CD4-positive, alpha-beta T cell (primary cell): ENCODE measurements at regions of chr19 and their contacts with region 1.

Region 1: GRCh38 chr19:45817010-45817724 is 2.1 kb upstream of the RSPH6A start:
- DNase-seq: peak; percentile 92 to 98 (median 96)
- ATAC-seq: peak; percentile 100
- H3K4me3 ChIP-seq: no peak overlapping the region
- H3K4me3 Mint-ChIP-seq: no peak overlapping the region
- H3K27ac ChIP-seq: no peak overlapping the region
- H3K27ac Mint-ChIP-seq: no peak overlapping the region
- H3K4me1 ChIP-seq: peaks cover 25% of the 10 kb centered on the region
- H3K4me1 Mint-ChIP-seq: peaks cover 6% of the 10 kb centered on the region
- H3K27me3 ChIP-seq: peaks cover 7 to 13% of the 10 kb centered on the region in 2 experiments
- H3K27me3 Mint-ChIP-seq: peaks cover 25% of the 10 kb centered on the region
- CTCF ChIP-seq: peak; percentile 100

Region 2: GRCh38 chr19:45798995-45799517 is 18.1 kb before region 1 on chr19:
- CTCF ChIA-PET with region 1: interaction called, 15 read pairs
- POLR2A ChIA-PET with region 1: no interaction called
- intact Hi-C with region 1: no loop called
- DNase-seq: peak in 13 of 14 experiments; percentile 33 to 82 (median 52)
- ATAC-seq: peak; percentile 96
- H3K4me3 ChIP-seq: no peak overlapping the region
- H3K4me3 Mint-ChIP-seq: no peak overlapping the region
- H3K27ac ChIP-seq: no peak overlapping the region
- H3K27ac Mint-ChIP-seq: no peak overlapping the region
- H3K4me1 ChIP-seq: peaks cover 7% of the 10 kb centered on the region
- H3K4me1 Mint-ChIP-seq: peaks cover 11% of the 10 kb centered on the region
- H3K27me3 ChIP-seq: peaks cover 28 to 33% of the 10 kb centered on the region in 2 experiments
- H3K27me3 Mint-ChIP-seq: peaks cover 39% of the 10 kb centered on the region
- CTCF ChIP-seq: peak; percentile 91

Region 3: GRCh38 chr19:45862564-45863334 is 45.6 kb after region 1 on chr19 and contains the start of gene SYMPK:
- CTCF ChIA-PET with region 1: interaction called, 8 read pairs
- POLR2A ChIA-PET with region 1: interaction called, 5 read pairs
- intact Hi-C with region 1: loop called in 1 of 2 experiments (anchors 5 kb)
- DNase-seq: peak; percentile 96 to 99 (median 98)
- ATAC-seq: peak; percentile 97
- H3K4me3 ChIP-seq: peak within 1 kb of the TSS; percentile 80
- H3K4me3 Mint-ChIP-seq: peak within 1 kb of the TSS; percentile 99
- H3K27ac ChIP-seq: peak within 1 kb of the TSS; percentile 66 to 86
- H3K27ac Mint-ChIP-seq: peak within 1 kb of the TSS; percentile 83
- H3K4me1 ChIP-seq: peaks cover 29% of the 10 kb centered on the region
- H3K4me1 Mint-ChIP-seq: peaks cover 34% of the 10 kb centered on the region
- H3K27me3 ChIP-seq: peaks cover 9 to 13% of the 10 kb centered on the region in 2 experiments
- H3K27me3 Mint-ChIP-seq: peaks cover 29% of the 10 kb centered on the region
- CTCF ChIP-seq: no peak
- total RNA-seq, gene SYMPK: 63.3 to 65.0 TPM

Region 4: GRCh38 chr19:45902651-45903625 is 85.8 kb after region 1 on chr19:
- CTCF ChIA-PET with region 1: interaction called, 10 read pairs
- POLR2A ChIA-PET with region 1: interaction called, 8 read pairs
- intact Hi-C with region 1: no loop called
- DNase-seq: peak; percentile 97 to 100 (median 99)
- ATAC-seq: peak; percentile 81
- H3K4me3 ChIP-seq: peak overlapping the region; percentile 64
- H3K4me3 Mint-ChIP-seq: peak overlapping the region; percentile 95
- H3K27ac ChIP-seq: peak overlapping the region; percentile 68 to 85
- H3K27ac Mint-ChIP-seq: peak overlapping the region; percentile 89
- H3K4me1 ChIP-seq: peaks cover 26% of the 10 kb centered on the region
- H3K4me1 Mint-ChIP-seq: peaks cover 28% of the 10 kb centered on the region
- H3K27me3 ChIP-seq: no peaks in the 10 kb centered on the region
- H3K27me3 Mint-ChIP-seq: no peaks in the 10 kb centered on the region
- CTCF ChIP-seq: no peak

Region 5: GRCh38 chr19:45981350-45981749 is 164.2 kb after region 1 on chr19:
- CTCF ChIA-PET with region 1: no interaction called
- POLR2A ChIA-PET with region 1: no interaction called
- intact Hi-C with region 1: no loop called
- DNase-seq: no peak
- ATAC-seq: no peak
- H3K4me3 ChIP-seq: no peak overlapping the region
- H3K4me3 Mint-ChIP-seq: no peak overlapping the region
- H3K27ac ChIP-seq: no peak overlapping the region
- H3K27ac Mint-ChIP-seq: no peak overlapping the region
- H3K4me1 ChIP-seq: no peaks in the 10 kb centered on the region
- H3K4me1 Mint-ChIP-seq: no peaks in the 10 kb centered on the region
- H3K27me3 ChIP-seq: peaks cover 2 to 6% of the 10 kb centered on the region in 2 experiments
- H3K27me3 Mint-ChIP-seq: peaks cover 56% of the 10 kb centered on the region
- CTCF ChIP-seq: no peak

Region 6: GRCh38 chr19:46016426-46017094 is 199.4 kb after region 1 on chr19:
- CTCF ChIA-PET with region 1: interaction called, 3 read pairs
- POLR2A ChIA-PET with region 1: no interaction called
- intact Hi-C with region 1: loop called (anchors 2 to 5 kb)
- DNase-seq: peak; percentile 67 to 93 (median 76)
- ATAC-seq: peak; percentile 74
- H3K4me3 ChIP-seq: peak overlapping the region; percentile 85
- H3K4me3 Mint-ChIP-seq: peak overlapping the region; percentile 95
- H3K27ac ChIP-seq: no peak overlapping the region
- H3K27ac Mint-ChIP-seq: peak overlapping the region; percentile 56
- H3K4me1 ChIP-seq: peaks cover 23% of the 10 kb centered on the region
- H3K4me1 Mint-ChIP-seq: peaks cover 21% of the 10 kb centered on the region
- H3K27me3 ChIP-seq: peaks cover 7 to 8% of the 10 kb centered on the region in 2 experiments
- H3K27me3 Mint-ChIP-seq: peaks cover 7% of the 10 kb centered on the region
- CTCF ChIP-seq: peak; percentile 94

Region 7: DNA sequence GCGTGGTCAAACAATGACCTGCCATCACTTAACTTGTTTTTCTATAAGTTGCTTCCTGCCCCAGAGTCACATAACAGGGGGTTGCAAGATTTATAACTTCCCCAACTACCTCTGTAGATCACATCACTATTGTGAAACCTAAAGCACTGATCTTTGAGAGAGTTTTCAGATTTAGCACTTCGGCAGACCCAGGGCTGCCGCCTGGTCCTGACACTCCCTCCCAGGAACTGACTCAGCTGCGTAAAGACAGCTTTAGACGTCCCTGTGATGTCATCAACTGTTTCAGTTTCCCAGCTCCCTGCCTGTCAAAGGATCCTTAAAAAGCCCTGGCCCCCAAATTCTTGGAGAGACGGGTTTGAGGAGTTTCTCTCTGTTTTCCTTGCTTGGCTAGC is 364.2 kb after region 1 on chr19:
- CTCF ChIA-PET with region 1: no interaction called
- POLR2A ChIA-PET with region 1: no interaction called
- intact Hi-C with region 1: no loop called
- DNase-seq: peak in 2 of 14 experiments; percentile 41 to 54
- ATAC-seq: no peak
- H3K4me3 ChIP-seq: no peak overlapping the region
- H3K4me3 Mint-ChIP-seq: no peak overlapping the region
- H3K27ac ChIP-seq: no peak overlapping the region
- H3K27ac Mint-ChIP-seq: no peak overlapping the region
- H3K4me1 ChIP-seq: no peaks in the 10 kb centered on the region
- H3K4me1 Mint-ChIP-seq: no peaks in the 10 kb centered on the region
- H3K27me3 ChIP-seq: peaks cover 3 to 15% of the 10 kb centered on the region in 2 experiments
- H3K27me3 Mint-ChIP-seq: peaks cover 38% of the 10 kb centered on the region
- CTCF ChIP-seq: no peak